Stomach (tissue), 19 donors: ENCODE measurements at regions of chr1 and their contacts with region 1.

Region 1: GRCh38 chr1:154961497-154962262 is at the start of gene PYGO2:
- DNase-seq: peak; percentile 81 to 94
- H3K4me3 ChIP-seq: peak within 1 kb of the TSS; percentile 84 to 95 (median 89)
- H3K27ac ChIP-seq: peak within 1 kb of the TSS; percentile 98 to 99 (median 99)
- H3K4me1 ChIP-seq: peaks cover 29 to 80% (median 67%) of the 10 kb centered on the region in 4 donors
- H3K27me3 ChIP-seq: no peaks in the 10 kb centered on the region
- CTCF ChIP-seq: peak in 5 of 7 experiments; percentile 30 to 77 (median 40)
- EP300 ChIP-seq: no peak
- POLR2A ChIP-seq: peak in 1 of 4 donors; percentile 31
- total RNA-seq, gene PYGO2: 8.1 to 75.3 (median 36.2) TPM

Region 2: GRCh38 chr1:155017041-155017945 is 55.6 kb after region 1 on chr1:
- intact Hi-C with region 1: loop called (anchors 10 kb)
- DNase-seq: peak; percentile 95 to 97
- H3K4me3 ChIP-seq: peak overlapping the region; percentile 39 to 48 (median 45)
- H3K27ac ChIP-seq: peak overlapping the region; percentile 83 to 100 (median 92)
- H3K4me1 ChIP-seq: peaks cover 37 to 71% (median 62%) of the 10 kb centered on the region in 4 donors
- H3K27me3 ChIP-seq: no peaks in the 10 kb centered on the region
- CTCF ChIP-seq: peak in 6 of 7 experiments; percentile 86 to 100 (median 96)
- EP300 ChIP-seq: peak; percentile 81
- POLR2A ChIP-seq: no peak